ENCODE measurements at regions of chr6 and their contacts with region 1.

Region 1: GRCh38 chr6:130020907-130021629 is 2.7 kb downstream of the L3MBTL3 start:
- DNase-seq: peak; percentile 34 to 84 (median 76)
- H3K4me3 ChIP-seq: peak overlapping the region; percentile 54 to 94 (median 74)
- H3K27ac ChIP-seq: peak overlapping the region in 53 of 59 donors; percentile 17 to 85 (median 68)
- H3K27me3 ChIP-seq: no peaks in the 10 kb centered on the region
- CTCF ChIP-seq: peak; percentile 66 to 94 (median 82)

Region 2: GRCh38 chr6:129498950-129499842 is 521.9 kb before region 1 on chr6:
- intact Hi-C with region 1: loop called in 1 of 2 experiments (anchors 5 kb)
- DNase-seq: no peak
- H3K4me3 ChIP-seq: peak overlapping the region in 23 of 59 donors; percentile 4 to 47 (median 26)
- H3K27ac ChIP-seq: peak overlapping the region in 26 of 59 donors; percentile 1 to 91 (median 28)
- H3K27me3 ChIP-seq: no peaks in the 10 kb centered on the region
- CTCF ChIP-seq: peak; percentile 58 to 88 (median 75)

Region 3: DNA sequence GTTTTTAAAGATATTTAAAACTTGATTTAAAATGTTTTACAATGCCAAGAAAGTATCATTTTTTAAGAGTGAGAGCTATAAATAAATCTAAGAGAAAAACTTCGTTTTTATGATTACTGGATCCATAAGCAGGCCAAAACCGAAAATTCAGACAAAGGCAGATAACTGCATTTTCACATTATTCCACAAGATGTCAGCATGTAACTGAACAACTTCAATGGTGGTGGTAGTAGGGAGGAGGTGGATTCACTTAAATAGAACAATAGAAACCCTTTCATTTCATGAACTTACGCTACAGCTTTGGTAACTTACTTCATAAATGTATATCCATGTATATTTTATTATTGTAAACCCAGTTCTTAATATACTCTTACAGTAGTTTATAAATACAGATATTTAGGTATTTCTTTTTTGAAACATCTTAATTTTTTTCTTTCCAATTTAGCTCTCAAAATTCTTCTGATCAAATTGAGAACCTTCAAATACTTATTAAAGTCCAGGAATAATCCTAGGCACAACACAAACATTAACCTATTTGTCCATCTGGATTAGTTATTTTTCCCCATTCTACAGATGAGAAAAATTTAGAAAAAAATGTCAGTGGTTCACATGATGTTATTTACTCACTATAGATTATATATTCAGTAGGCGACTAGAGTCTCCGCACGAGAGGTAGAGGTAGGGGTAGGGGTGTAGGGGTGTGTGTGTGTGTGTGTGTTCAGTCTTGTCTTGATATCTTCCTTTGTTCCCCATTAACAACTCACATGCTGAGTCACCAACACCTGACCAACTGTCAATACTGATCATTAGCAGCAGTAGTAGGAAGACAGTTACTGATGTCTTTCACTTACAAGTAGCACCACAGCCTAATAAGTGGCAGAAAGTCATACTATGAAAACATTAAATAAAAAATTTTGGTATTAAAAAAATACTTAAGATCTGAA is 422.6 kb before region 1 on chr6:
- intact Hi-C with region 1: loop called (anchors 5 kb)
- DNase-seq: no peak
- H3K4me3 ChIP-seq: peak overlapping the region in 14 of 59 donors; percentile 2 to 42 (median 18)
- H3K27ac ChIP-seq: no peak overlapping the region
- H3K27me3 ChIP-seq: no peaks in the 10 kb centered on the region
- CTCF ChIP-seq: peak; percentile 71 to 99 (median 89)

Region 4: DNA sequence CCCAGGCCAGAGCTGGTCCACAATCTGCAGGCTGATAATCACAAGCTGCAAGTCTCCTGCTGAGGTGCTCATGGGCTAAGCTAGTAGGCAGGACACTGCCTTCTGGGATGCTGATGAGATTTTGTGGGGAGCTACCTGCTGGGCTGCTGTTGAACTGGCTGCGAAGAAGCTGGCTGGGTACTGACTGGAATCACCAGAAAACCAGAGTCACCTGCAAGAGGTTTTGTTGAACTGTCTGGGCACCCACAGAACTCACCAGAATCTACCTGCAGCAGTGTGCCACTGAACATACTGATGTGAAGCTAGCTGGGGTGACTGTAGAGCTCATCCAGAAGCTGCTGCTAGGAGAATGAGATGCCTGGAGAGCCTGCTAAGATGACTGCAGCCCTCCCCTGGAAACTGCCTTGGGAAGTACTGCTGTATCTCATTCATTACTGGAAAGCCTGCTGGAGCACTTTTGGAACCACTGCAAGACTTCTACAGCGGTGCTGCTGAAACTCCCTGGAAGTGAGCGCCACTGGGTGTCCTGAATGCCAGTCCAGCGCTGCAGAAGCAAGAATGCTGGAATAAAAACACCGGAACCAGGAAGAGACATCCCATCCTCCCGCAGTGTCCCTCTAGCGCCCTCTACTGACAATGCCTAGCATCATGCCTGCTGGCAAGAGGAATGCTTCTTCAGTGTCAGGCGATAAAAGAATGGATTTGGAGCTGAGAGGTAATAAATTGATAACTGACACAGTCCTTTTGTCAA is 246.2 kb before region 1 on chr6:
- intact Hi-C with region 1: loop called in 1 of 2 experiments (anchors 10 kb)
- DNase-seq: peak; percentile 31 to 81 (median 72)
- H3K4me3 ChIP-seq: peak overlapping the region in 40 of 59 donors; percentile 1 to 57 (median 34)
- H3K27ac ChIP-seq: peak overlapping the region in 22 of 59 donors; percentile 8 to 70 (median 35)
- H3K27me3 ChIP-seq: no peaks in the 10 kb centered on the region
- CTCF ChIP-seq: peak; percentile 44 to 95 (median 86)

Region 5: GRCh38 chr6:129893640-129894039 is 127.4 kb before region 1 on chr6:
- intact Hi-C with region 1: loop called (anchors 2 to 5 kb)
- DNase-seq: no peak
- H3K4me3 ChIP-seq: no peak overlapping the region
- H3K27ac ChIP-seq: no peak overlapping the region
- H3K27me3 ChIP-seq: no peaks in the 10 kb centered on the region
- CTCF ChIP-seq: peak in 55 of 56 donors; percentile 43 to 79 (median 61)

Region 6: GRCh38 chr6:129936329-129937165 is 84.5 kb before region 1 on chr6:
- intact Hi-C with region 1: loop called in 1 of 2 experiments (anchors 2 kb)
- DNase-seq: peak in 3 of 10 donors; percentile 17 to 52 (median 39)
- H3K4me3 ChIP-seq: peak overlapping the region in 14 of 59 donors; percentile 3 to 51 (median 22)
- H3K27ac ChIP-seq: no peak overlapping the region
- H3K27me3 ChIP-seq: peaks cover 0 to under 1% (median 0%) of the 10 kb centered on the region in 45 donors
- CTCF ChIP-seq: peak; percentile 32 to 81 (median 67)

Region 7: DNA sequence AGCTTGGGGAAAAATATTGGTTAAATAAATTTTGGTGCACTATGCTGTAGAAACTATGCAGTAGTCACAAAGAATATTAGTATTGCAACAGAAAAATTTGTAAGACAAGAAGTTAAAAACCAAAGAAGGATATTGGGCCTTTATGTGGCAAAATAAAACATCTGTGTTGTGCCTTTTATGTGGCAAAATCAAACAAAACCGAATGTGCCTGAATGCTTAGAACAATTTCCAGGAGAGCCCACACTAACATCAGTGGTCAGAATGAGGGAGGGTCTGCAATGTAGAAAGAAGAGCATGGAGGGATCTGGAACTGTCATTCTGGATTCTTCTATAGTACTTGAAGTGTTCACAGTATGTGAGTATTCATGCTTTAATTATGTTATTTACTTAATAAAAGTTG is 72.5 kb after region 1 on chr6:
- intact Hi-C with region 1: no loop called
- DNase-seq: no peak
- H3K4me3 ChIP-seq: no peak overlapping the region
- H3K27ac ChIP-seq: no peak overlapping the region
- H3K27me3 ChIP-seq: no peaks in the 10 kb centered on the region
- CTCF ChIP-seq: no peak

Measured in dorsolateral prefrontal cortex (tissue), 120 donors.